H1 (cell line): ENCODE measurements at regions of chr15 and their contacts with region 1.

Region 1: DNA sequence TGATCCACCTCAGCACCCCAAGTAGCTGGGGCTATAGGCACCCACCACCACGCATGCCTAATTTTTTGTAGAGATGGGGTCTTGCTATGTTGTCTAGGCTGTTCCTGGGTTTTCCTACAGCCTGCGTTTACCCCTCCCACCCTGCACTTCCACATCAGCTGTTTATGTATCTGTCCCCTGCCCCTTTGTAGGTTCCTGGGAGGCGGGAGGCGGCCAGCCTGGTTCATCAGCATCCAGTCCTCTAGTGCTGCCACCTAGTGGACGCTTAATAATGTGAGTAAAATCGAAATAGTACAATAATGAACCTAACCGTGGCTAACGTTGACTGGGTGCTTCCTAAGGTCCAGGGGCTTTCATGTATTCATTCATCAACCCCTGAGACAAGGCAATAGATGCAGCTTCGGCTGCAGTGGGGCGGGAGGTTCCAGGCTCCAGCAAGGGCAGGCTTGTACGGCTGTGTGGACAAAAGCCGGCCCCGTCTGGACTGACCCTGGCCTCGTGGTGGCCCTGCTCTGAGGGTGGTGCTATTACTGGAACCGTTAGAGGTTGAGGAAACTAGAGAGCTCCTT is 1.2 kb upstream of the LCTL start:
- DNase-seq: peak; percentile 53 to 80
- H3K4me3 ChIP-seq: no peak overlapping the region
- H3K27ac ChIP-seq: no peak overlapping the region
- H3K4me1 ChIP-seq: peaks cover 4 to 22% (median 17%) of the 10 kb centered on the region in 4 experiments
- H3K27me3 ChIP-seq: no peaks in the 10 kb centered on the region
- CTCF ChIP-seq: peak; percentile 33 to 75 (median 58)
- EP300 ChIP-seq: peak in 1 of 2 experiments; percentile 33; a peak in 1 of 3 replicates
- POLR2A ChIP-seq: no peak
- RAD21 ChIP-seq: peak; percentile 37 to 59

Region 2: GRCh38 chr15:66581972-66582537 is 15.0 kb after region 1 on chr15:
- CTCF ChIA-PET with region 1: interaction called, 17 read pairs
- POLR2A ChIA-PET with region 1: interaction called, 7 read pairs
- DNase-seq: no peak
- H3K4me3 ChIP-seq: no peak overlapping the region
- H3K27ac ChIP-seq: no peak overlapping the region
- H3K4me1 ChIP-seq: peaks cover 0 to 7% (median 0%) of the 10 kb centered on the region in 4 experiments; a peak in 3 of 7 replicates
- H3K27me3 ChIP-seq: peaks cover 0 to 2% (median 0%) of the 10 kb centered on the region in 4 experiments; a peak in 1 of 7 replicates
- CTCF ChIP-seq: no peak
- EP300 ChIP-seq: no peak
- POLR2A ChIP-seq: no peak
- RAD21 ChIP-seq: no peak

Region 3: GRCh38 chr15:66588537-66588936 is 21.5 kb after region 1 on chr15:
- CTCF ChIA-PET with region 1: interaction called, 17 read pairs
- POLR2A ChIA-PET with region 1: interaction called, 7 read pairs
- DNase-seq: peak in 1 of 2 experiments; percentile 83
- H3K4me3 ChIP-seq: peak overlapping the region in 3 of 4 experiments; percentile 6 to 44 (median 19); a peak in 4 of 8 replicates
- H3K27ac ChIP-seq: no peak overlapping the region
- H3K4me1 ChIP-seq: peaks cover 0 to 5% (median 3%) of the 10 kb centered on the region in 4 experiments; a peak in 4 of 7 replicates
- H3K27me3 ChIP-seq: 0 out of 7 replicates have a peak, but pooled peaks cover 0 to 2% (median 0%) of the 10 kb centered on the region in 4 experiments
- CTCF ChIP-seq: peak; percentile 76 to 88 (median 78)
- EP300 ChIP-seq: no peak
- POLR2A ChIP-seq: no peak
- RAD21 ChIP-seq: peak; percentile 71 to 79